ENCODE measurements at regions of chr16 and their contacts with region 1.

Region 1: GRCh38 chr16:79278506-79278905 is 322.0 kb downstream of the MAF start:
- DNase-seq: no peak
- H3K4me3 ChIP-seq: no peak overlapping the region
- H3K4me3 Mint-ChIP-seq: no peak overlapping the region
- H3K27ac Mint-ChIP-seq: no peak overlapping the region
- H3K4me1 ChIP-seq: no peaks in the 10 kb centered on the region
- H3K4me1 Mint-ChIP-seq: no peaks in the 10 kb centered on the region
- H3K27me3 ChIP-seq: no peaks in the 10 kb centered on the region
- H3K27me3 Mint-ChIP-seq: peaks cover 27% of the 10 kb centered on the region
- CTCF ChIP-seq: no peak

Region 2: DNA sequence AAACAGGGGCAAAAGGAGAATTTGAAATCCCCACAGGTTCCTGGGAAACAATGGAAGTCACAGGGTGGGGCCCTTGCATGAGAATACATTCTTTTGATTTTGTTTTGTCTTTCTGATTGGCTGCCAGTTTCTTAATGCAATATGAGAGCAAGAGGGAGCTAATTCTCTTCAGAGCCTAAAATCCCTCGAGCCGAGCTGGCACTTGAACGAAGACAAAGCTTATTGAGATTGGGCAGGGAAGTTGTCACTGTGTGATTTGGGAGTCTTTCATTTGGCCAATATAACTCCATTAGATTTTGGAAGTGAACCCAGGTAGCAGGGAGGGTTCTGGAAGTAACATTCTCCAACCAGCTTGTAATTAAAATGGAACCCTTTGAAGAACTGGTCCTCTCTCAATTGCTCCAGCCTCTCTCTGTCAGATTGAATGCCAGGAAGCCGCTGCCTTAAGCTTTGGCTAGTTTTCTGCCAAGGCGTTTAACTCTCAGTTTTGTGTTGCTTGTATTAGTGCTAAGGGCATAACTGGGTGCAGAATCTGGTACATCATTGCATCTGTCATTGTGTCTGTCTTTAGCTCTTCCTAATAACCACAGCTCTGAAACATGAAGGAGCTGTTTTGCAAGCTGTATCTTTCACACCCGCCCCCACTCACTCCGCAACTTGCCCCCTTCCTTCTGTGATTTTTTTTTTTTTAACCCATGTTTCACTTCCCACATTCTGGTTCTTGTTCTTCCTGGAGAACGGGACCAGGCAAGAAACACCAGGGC is 50.1 kb after region 1 on chr16:
- CTCF ChIA-PET with region 1: no interaction called
- POLR2A ChIA-PET with region 1: no interaction called
- intact Hi-C with region 1: loop called (anchors 5 kb)
- DNase-seq: no peak
- H3K4me3 ChIP-seq: no peak overlapping the region
- H3K4me3 Mint-ChIP-seq: no peak overlapping the region
- H3K27ac Mint-ChIP-seq: no peak overlapping the region
- H3K4me1 ChIP-seq: peaks cover 17% of the 10 kb centered on the region
- H3K4me1 Mint-ChIP-seq: peaks cover 18% of the 10 kb centered on the region
- H3K27me3 ChIP-seq: peaks cover 2% of the 10 kb centered on the region; the same call in 1 of the 2 replicates
- H3K27me3 Mint-ChIP-seq: no peaks in the 10 kb centered on the region
- CTCF ChIP-seq: no peak

Measured in Caco-2 (cell line).